Activated CD4-positive, alpha-beta T cell treated with anti-CD3 and anti-CD28 coated beads for 36 hours (primary cell): ENCODE measurements at regions of chr1 and their contacts with region 1.

Region 1: DNA sequence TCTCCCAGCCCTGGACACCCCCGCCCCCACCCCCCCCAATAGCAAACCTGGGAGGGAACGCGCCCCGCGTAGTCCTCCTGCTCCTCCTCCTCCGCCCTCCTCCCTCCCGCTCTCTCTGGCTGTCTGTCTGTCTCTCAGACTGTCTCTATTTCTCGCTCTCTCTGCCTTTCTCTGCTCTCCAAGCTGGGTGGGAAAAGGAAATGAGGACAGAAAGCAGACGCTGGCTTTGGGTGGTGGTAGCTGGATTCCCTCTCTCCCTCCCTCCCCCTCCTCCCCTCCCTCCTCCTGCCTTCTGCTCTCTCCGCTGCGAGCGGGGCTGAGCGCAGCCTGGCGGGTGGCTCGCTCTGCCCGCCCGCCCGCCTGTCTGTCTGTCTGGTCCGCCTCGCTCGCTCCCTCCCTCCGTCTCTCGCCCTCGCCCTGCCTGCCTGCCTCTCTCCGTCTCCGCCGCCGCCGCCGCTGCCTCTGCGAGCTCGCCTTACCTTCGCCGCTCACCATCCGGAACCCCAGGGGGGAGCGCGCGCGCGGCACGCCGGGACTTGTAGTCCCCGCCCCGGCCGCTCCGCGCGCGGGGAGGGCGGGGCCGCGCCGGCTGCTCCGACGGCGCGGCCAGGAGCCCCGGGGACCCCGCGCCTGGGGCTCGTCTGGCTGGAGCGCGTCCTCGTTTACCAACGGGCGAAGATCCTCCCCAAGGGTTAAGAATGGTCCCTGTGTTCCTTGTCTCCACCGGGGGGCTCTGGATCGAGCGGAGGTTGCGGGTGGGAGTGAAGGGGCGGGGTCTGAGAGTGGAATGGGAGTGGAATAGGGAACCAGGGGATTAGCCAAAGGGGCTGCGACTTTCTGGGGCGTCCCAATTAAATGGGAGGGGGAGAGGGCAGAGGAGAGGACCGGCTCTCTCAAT is at the start of gene AHDC1:
- DNase-seq: peak; percentile 96
- ATAC-seq: peak; percentile 77
- H3K4me3 Mint-ChIP-seq: peak within 1 kb of the TSS; percentile 91
- H3K27ac Mint-ChIP-seq: peak within 1 kb of the TSS; percentile 70
- H3K4me1 Mint-ChIP-seq: peaks cover 36% of the 10 kb centered on the region
- H3K27me3 Mint-ChIP-seq: no peaks in the 10 kb centered on the region
- total RNA-seq, gene AHDC1: 10.3 to 12.1 TPM

Region 2: GRCh38 chr1:27234049-27234882 is 369.7 kb before region 1 on chr1 and contains the start of gene WDTC1:
- CTCF ChIA-PET with region 1: no interaction called
- POLR2A ChIA-PET with region 1: no interaction called
- intact Hi-C with region 1: loop called in 1 of 2 experiments (anchors 1 kb)
- DNase-seq: peak; percentile 99
- ATAC-seq: peak; percentile 95
- H3K4me3 Mint-ChIP-seq: peak within 1 kb of the TSS; percentile 95
- H3K27ac Mint-ChIP-seq: peak within 1 kb of the TSS; percentile 93
- H3K4me1 Mint-ChIP-seq: peaks cover 27% of the 10 kb centered on the region
- H3K27me3 Mint-ChIP-seq: no peaks in the 10 kb centered on the region
- total RNA-seq, gene WDTC1: 19.3 to 21.9 TPM

Region 3: DNA sequence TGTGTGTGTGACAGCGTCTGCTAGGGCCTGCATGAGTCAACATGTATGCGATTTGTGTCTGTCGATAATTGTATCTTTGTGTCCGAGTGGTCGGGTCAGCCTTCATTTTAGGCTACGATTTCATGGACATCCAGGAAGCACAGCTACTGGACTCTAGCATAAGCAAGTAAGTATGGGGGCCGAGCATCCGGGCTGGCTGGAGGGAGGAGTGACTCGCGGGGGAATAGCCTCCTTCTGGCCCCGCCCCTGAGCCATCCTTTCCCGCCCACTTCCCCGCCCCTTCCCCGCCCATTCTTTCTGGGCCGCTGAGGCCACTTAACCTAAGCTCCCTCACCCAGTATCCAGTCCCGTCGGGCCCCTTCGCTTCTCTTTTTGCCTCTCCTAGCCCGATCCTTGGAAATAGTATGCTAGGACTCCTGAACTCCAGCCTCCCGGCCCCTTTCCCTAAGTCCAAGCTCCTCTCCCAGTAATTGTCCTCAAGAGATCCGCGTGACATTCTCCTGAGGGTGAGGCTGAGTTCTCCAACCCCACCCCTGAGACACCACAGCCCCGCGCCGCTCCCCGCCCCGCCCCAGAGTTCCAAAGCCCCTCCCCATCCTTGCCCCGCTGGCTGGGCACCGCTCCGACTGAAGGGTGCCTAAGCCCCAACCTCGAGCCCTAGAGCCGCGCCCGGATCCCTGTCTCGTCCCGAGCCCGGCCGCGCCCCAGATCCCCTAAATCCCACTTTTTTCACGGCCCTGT is 238.4 kb before region 1 on chr1:
- CTCF ChIA-PET with region 1: interaction called, 4 read pairs
- POLR2A ChIA-PET with region 1: interaction called, 5 read pairs
- intact Hi-C with region 1: loop called in 1 of 2 experiments (anchors 1 kb)
- DNase-seq: peak; percentile 92
- ATAC-seq: peak; percentile 68
- H3K4me3 Mint-ChIP-seq: peak overlapping the region; percentile 75
- H3K27ac Mint-ChIP-seq: peak overlapping the region; percentile 73
- H3K4me1 Mint-ChIP-seq: peaks cover 30% of the 10 kb centered on the region
- H3K27me3 Mint-ChIP-seq: no peaks in the 10 kb centered on the region

Region 4: GRCh38 chr1:27380766-27381733 is 222.9 kb before region 1 on chr1:
- CTCF ChIA-PET with region 1: no interaction called
- POLR2A ChIA-PET with region 1: no interaction called
- intact Hi-C with region 1: no loop called
- DNase-seq: no peak
- ATAC-seq: no peak
- H3K4me3 Mint-ChIP-seq: no peak overlapping the region
- H3K27ac Mint-ChIP-seq: no peak overlapping the region
- H3K4me1 Mint-ChIP-seq: no peaks in the 10 kb centered on the region
- H3K27me3 Mint-ChIP-seq: no peaks in the 10 kb centered on the region

Region 5: DNA sequence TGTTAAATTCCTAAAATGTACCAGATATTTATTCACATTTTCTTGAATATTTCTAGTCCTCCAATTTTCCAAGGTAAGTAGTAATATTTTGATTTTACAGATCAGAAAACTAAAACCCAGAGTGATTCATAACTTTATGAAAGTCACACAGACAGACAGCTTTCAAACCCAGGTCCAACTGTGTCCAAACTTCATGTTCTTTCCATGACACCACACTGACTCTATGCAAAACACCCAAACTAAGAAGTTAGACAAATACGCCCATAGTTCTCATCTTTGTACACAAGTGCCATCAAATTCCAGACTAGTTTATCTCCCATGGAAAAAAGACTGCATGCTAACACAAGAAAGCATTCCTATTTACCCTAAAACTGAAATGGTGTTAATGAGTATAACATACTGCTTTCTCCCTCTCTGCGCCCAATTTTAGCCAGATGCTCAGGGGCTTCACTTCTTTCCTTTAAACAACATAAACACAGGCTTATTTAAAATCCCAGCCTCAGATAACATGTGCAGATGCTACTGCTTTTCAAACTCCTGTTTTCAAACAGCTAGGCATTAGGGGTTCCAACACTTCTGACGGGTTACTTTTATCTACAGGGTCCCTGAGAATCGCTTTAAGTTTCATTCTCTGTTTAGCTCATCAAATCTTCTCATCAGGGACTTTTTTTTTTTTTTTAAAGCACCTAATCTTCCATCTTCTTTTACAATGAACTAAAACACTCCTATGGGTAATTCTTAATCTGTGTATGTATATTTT is 158.6 kb before region 1 on chr1:
- CTCF ChIA-PET with region 1: interaction called, 11 read pairs
- POLR2A ChIA-PET with region 1: no interaction called
- intact Hi-C with region 1: no loop called
- DNase-seq: peak; percentile 20
- ATAC-seq: peak; percentile 74
- H3K4me3 Mint-ChIP-seq: peak overlapping the region; percentile 61
- H3K27ac Mint-ChIP-seq: peak overlapping the region; percentile 95
- H3K4me1 Mint-ChIP-seq: peaks cover 60% of the 10 kb centered on the region
- H3K27me3 Mint-ChIP-seq: no peaks in the 10 kb centered on the region

Region 6: GRCh38 chr1:27568300-27569087 is 35.4 kb before region 1 on chr1:
- CTCF ChIA-PET with region 1: interaction called, 5 read pairs
- POLR2A ChIA-PET with region 1: interaction called, 4 read pairs
- intact Hi-C with region 1: loop called in 1 of 2 experiments (anchors 1 kb)
- DNase-seq: peak; percentile 95
- ATAC-seq: peak; percentile 97
- H3K4me3 Mint-ChIP-seq: peak overlapping the region; percentile 39
- H3K27ac Mint-ChIP-seq: no peak overlapping the region
- H3K4me1 Mint-ChIP-seq: peaks cover 18% of the 10 kb centered on the region
- H3K27me3 Mint-ChIP-seq: no peaks in the 10 kb centered on the region

Region 7: GRCh38 chr1:27704958-27705357 is 101.0 kb after region 1 on chr1:
- CTCF ChIA-PET with region 1: no interaction called
- POLR2A ChIA-PET with region 1: no interaction called
- intact Hi-C with region 1: no loop called
- DNase-seq: no peak
- ATAC-seq: no peak
- H3K4me3 Mint-ChIP-seq: no peak overlapping the region
- H3K27ac Mint-ChIP-seq: no peak overlapping the region
- H3K4me1 Mint-ChIP-seq: no peaks in the 10 kb centered on the region
- H3K27me3 Mint-ChIP-seq: peaks cover 3% of the 10 kb centered on the region

Region 8: DNA sequence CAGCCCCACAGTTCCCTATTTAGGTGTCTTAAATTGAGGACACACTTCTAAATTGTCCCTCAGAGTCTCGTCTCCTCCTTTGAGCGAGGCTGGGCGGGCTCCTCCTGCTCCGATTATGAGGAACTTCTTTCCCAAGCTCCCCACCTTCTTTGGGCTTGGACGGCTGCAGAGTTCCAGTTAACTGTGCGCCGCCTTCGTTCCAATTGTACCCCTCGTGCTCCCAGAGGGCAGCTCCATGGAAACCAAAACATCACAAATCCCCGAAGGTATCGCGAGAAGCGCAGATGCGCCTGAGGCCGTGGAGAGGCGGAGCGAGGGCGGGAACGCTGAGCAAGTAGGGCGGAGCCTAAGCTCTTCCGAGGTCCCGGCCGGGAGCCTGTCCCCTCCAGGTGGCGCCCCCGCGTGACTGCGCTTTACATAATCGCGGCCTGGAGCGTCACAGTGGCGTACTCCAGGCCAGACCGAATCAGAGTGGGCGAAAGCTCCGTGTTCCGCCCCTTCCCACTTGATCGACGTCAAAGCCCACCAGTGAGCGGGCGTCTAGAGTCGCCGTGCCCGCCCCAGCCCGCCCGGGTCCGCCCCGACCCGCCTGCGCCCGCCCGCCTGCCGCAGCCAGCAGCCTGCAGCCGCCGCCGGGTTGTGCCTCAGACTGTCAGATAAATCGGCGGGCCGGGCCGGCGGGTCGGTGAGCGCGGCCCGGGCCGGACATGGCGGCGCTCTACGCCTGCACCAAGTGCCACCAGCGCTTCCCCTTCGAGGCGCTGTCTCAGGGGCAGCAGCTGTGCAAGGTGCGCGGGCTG is 121.6 kb after region 1 on chr1 and contains the start of gene FAM76A:
- CTCF ChIA-PET with region 1: no interaction called
- POLR2A ChIA-PET with region 1: no interaction called
- intact Hi-C with region 1: loop called in 1 of 2 experiments (anchors 1 kb)
- DNase-seq: peak; percentile 100
- ATAC-seq: peak; percentile 95
- H3K4me3 Mint-ChIP-seq: peak within 1 kb of the TSS; percentile 78
- H3K27ac Mint-ChIP-seq: peak within 1 kb of the TSS; percentile 93
- H3K4me1 Mint-ChIP-seq: peaks cover 15% of the 10 kb centered on the region
- H3K27me3 Mint-ChIP-seq: no peaks in the 10 kb centered on the region
- total RNA-seq, gene FAM76A: 7.4 to 8.1 TPM

Region 9: GRCh38 chr1:27763358-27763757 is 159.4 kb after region 1 on chr1:
- CTCF ChIA-PET with region 1: no interaction called
- POLR2A ChIA-PET with region 1: no interaction called
- intact Hi-C with region 1: no loop called
- DNase-seq: no peak
- ATAC-seq: no peak
- H3K4me3 Mint-ChIP-seq: no peak overlapping the region
- H3K27ac Mint-ChIP-seq: no peak overlapping the region
- H3K4me1 Mint-ChIP-seq: no peaks in the 10 kb centered on the region
- H3K27me3 Mint-ChIP-seq: no peaks in the 10 kb centered on the region

Region 10: GRCh38 chr1:28602536-28603439 is 998.9 kb after region 1 on chr1:
- CTCF ChIA-PET with region 1: no interaction called
- POLR2A ChIA-PET with region 1: no interaction called
- intact Hi-C with region 1: no loop called
- DNase-seq: peak; percentile 60
- ATAC-seq: no peak
- H3K4me3 Mint-ChIP-seq: no peak overlapping the region
- H3K27ac Mint-ChIP-seq: no peak overlapping the region
- H3K4me1 Mint-ChIP-seq: peaks cover 13% of the 10 kb centered on the region
- H3K27me3 Mint-ChIP-seq: no peaks in the 10 kb centered on the region